ENCODE measurements at regions of chr10 and their contacts with region 1.

Region 1: DNA sequence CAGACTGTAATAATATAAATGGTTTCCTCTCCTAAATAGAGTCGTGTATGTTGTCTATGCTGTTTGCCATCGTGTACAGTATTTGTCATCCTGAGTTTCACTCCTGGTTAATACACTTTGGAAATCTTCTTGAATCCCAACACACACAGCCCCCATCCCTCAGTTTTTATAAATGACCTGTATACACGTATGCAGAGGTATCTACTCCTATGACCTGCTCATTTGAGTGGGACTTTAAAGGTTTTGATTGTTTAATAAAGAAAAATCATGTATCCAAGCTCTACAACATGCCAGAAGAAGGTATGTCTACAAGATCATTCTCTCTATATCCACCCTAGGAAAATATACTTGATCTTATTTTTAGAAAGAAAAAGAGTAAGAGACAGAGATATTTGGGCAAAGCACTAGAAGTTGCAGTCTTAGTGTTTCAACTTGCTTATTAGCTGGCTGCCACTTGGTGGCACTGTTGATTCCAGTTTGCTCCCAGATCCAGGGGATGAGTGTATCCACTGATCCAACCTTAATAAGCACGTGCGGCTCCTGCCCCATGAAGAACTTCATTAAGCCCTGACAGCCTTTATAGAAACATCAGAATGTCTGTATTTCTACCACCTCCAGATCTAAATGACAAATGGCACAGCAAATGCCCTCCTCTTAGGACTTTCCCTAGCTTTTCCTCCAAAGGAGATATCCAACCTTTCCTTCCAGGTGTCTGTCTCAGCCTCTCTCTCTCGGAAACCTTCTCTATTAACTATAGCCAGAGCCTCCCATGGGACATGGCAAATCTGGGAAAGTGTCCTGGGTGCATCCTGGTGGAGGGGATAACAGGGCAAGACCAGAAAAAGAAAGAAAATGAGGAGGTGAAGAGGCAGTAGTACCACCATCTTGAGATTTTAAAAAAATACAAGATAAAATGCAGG is 181.6 kb upstream of the NEBL start:
- DNase-seq: peak; percentile 88
- H3K4me3 Mint-ChIP-seq: no peak overlapping the region
- H3K27ac Mint-ChIP-seq: no peak overlapping the region
- H3K4me1 Mint-ChIP-seq: peaks cover 31% of the 10 kb centered on the region
- H3K27me3 Mint-ChIP-seq: no peaks in the 10 kb centered on the region
- CTCF ChIP-seq: peak; percentile 74

Region 2: GRCh38 chr10:21048068-21048467 is 30.6 kb before region 1 on chr10:
- CTCF ChIA-PET with region 1: interaction called, 10 read pairs
- POLR2A ChIA-PET with region 1: no interaction called
- intact Hi-C with region 1: no loop called
- DNase-seq: peak; percentile 66
- H3K4me3 Mint-ChIP-seq: no peak overlapping the region
- H3K27ac Mint-ChIP-seq: peak overlapping the region; percentile 50
- H3K4me1 Mint-ChIP-seq: peaks cover 27% of the 10 kb centered on the region
- H3K27me3 Mint-ChIP-seq: no peaks in the 10 kb centered on the region
- CTCF ChIP-seq: no peak

Region 3: DNA sequence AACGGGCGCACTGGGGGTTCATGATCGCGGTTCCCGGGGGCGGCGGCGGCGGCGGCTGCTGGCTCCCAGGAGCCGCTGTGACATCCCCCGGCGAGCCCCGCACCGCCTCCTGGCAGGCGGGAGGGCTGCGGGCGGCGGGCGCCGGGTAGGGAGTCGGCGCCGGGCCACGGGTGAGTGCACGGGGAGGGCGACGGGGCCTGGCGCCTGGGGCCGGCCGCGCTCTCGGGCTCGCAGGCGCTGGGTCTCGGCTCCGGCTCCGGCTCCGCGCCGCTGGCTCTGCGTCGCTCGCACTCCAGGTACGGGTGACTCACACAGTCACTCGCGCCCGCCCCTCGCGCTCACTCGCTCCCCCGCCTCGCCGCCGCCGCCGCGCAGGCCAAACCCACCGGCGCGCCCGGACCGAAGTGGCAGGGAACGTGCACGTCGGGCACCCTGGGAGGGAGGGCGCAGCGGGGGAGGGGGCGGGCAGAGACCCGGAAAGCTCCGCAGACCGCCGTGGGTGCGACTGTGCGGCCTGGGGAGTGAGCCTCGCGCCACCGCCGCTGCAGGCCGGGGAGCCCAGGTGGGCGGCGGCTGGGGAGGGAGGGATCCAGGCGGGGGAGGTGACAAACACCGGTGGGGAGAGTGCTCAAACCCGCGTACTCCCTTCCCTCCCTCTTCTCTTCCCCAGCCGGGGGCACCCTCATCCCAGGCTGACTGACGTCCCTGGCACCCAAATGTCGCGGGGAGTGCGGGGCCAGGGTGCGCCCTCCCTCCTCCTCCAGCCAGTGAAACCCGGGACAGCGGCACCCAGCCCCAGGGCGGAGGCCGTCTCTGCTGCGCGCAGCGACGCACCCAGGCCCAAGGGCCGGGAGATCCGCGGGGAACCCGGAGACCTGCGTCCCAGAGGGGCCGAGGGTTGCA is 95.4 kb after region 1 on chr10:
- CTCF ChIA-PET with region 1: interaction called, 7 read pairs
- POLR2A ChIA-PET with region 1: interaction called, 8 read pairs
- intact Hi-C with region 1: loop called (anchors 1 kb)
- DNase-seq: peak; percentile 79
- H3K4me3 Mint-ChIP-seq: peak overlapping the region; percentile 79
- H3K27ac Mint-ChIP-seq: peak overlapping the region; percentile 75
- H3K4me1 Mint-ChIP-seq: peaks cover 28% of the 10 kb centered on the region
- H3K27me3 Mint-ChIP-seq: no peaks in the 10 kb centered on the region
- CTCF ChIP-seq: no peak

Region 4: GRCh38 chr10:21273400-21273932 is 194.8 kb after region 1 on chr10:
- CTCF ChIA-PET with region 1: interaction called, 120 read pairs
- POLR2A ChIA-PET with region 1: interaction called, 5 read pairs
- intact Hi-C with region 1: loop called (anchors 1 kb)
- DNase-seq: no peak
- H3K4me3 Mint-ChIP-seq: no peak overlapping the region
- H3K27ac Mint-ChIP-seq: no peak overlapping the region
- H3K4me1 Mint-ChIP-seq: peaks cover 11% of the 10 kb centered on the region
- H3K27me3 Mint-ChIP-seq: no peaks in the 10 kb centered on the region
- CTCF ChIP-seq: no peak

Measured in MCF 10A (cell line).